ENCODE measurements at regions of chr10 and their contacts with region 1.

Region 1: DNA sequence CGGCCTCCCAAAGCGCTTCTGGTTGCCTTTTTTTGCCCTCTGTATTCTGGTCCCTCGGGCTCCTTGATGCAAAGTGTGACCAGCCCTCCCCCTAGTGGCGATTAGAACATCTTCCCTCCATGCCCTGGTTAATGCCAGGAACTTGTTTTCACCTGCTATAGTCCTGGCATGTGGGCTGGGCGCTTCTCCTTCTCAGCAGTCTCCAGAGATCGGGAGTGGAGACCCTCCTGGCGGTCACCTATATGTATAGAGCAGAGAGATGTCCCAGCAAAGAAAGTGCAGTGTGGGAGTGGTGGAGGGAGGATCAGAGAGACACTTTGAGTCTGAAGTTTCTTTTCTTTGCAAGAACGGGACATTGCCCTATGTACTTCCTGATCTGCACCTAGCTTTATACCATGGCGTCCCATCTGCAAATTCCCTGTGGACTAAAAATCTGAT is 264.1 kb downstream of the OTUD1 start:
- DNase-seq: peak; percentile 72
- H3K4me3 Mint-ChIP-seq: no peak overlapping the region
- H3K27ac Mint-ChIP-seq: no peak overlapping the region
- H3K4me1 Mint-ChIP-seq: peaks cover 13% of the 10 kb centered on the region
- H3K27me3 Mint-ChIP-seq: peaks cover 20% of the 10 kb centered on the region

Region 2: GRCh38 chr10:23293145-23293724 is 409.8 kb before region 1 on chr10:
- CTCF ChIA-PET with region 1: no interaction called
- intact Hi-C with region 1: loop called (anchors 1 kb)
- DNase-seq: peak; percentile 71
- H3K4me3 Mint-ChIP-seq: no peak overlapping the region
- H3K27ac Mint-ChIP-seq: no peak overlapping the region
- H3K4me1 Mint-ChIP-seq: peaks cover 2% of the 10 kb centered on the region
- H3K27me3 Mint-ChIP-seq: peaks cover 14% of the 10 kb centered on the region

Region 3: DNA sequence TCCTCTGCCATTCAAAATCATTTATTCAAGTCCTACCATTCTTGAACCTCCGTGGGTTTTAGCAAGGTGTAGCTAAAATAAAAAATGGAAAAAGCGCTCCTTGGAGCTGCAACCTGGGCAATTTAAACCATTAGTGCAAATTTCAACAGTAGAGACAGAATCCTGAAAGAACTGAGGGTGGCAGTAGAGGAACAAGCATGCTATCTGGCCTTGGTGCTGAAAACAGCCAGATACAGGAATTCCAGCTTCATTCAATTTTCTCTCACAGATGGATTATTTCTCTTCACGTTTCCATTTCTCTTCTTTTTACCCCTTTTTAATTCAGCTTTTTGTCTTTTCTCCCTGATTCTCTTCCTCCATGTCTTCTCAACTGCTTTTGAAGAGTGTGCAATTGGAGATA is 186.5 kb before region 1 on chr10:
- CTCF ChIA-PET with region 1: interaction called, 3 read pairs
- intact Hi-C with region 1: loop called (anchors 1 kb)
- DNase-seq: no peak
- H3K4me3 Mint-ChIP-seq: no peak overlapping the region
- H3K27ac Mint-ChIP-seq: no peak overlapping the region
- H3K4me1 Mint-ChIP-seq: peaks cover 8% of the 10 kb centered on the region
- H3K27me3 Mint-ChIP-seq: no peaks in the 10 kb centered on the region

Region 4: DNA sequence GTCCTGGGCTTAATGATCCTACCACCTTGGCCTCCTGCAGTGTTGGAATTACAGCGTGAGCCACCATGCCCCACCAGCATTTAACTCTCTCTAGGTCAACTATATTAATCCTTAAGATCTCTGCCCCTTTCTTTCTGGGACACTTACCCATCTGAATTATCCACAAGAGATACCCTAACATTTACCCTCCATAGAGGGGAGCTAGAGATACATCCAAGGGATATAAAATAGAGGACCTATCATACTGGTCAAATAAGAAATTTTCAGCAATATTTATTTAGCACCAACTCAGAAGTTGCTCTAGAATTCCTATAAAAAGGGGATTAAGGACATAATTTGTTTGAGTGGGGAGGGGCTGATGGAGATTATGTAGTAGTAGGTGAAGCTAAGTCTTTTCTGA is 167.6 kb before region 1 on chr10:
- CTCF ChIA-PET with region 1: interaction called, 15 read pairs
- intact Hi-C with region 1: loop called (anchors 1 kb)
- DNase-seq: no peak
- H3K4me3 Mint-ChIP-seq: peak overlapping the region; percentile 14
- H3K27ac Mint-ChIP-seq: peak overlapping the region; percentile 72
- H3K4me1 Mint-ChIP-seq: peaks cover 77% of the 10 kb centered on the region
- H3K27me3 Mint-ChIP-seq: no peaks in the 10 kb centered on the region

Region 5: GRCh38 chr10:23656735-23657134 is 46.3 kb before region 1 on chr10:
- CTCF ChIA-PET with region 1: no interaction called
- intact Hi-C with region 1: no loop called
- DNase-seq: peak; percentile 16
- H3K4me3 Mint-ChIP-seq: no peak overlapping the region
- H3K27ac Mint-ChIP-seq: no peak overlapping the region
- H3K4me1 Mint-ChIP-seq: peaks cover 2% of the 10 kb centered on the region
- H3K27me3 Mint-ChIP-seq: peaks cover 4% of the 10 kb centered on the region

Region 6: DNA sequence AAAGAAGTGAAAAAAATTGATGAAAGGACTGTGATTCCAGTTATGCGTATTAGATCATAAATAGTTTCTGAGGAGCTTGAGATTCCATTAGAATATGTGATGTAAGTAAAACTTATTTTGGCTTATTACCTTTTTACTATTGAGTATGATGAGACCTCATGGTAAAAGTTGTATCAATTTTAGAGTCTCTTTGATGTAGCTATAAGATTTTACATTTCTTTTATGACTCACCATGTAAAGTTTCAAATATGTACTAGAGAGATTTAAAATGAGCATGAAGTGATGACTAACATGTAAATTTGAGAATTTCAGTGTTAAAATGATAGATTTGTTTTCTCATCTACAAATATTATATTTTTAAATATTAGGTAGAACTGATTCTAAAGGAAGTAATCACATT is 12.4 kb after region 1 on chr10:
- CTCF ChIA-PET with region 1: interaction called, 4 read pairs
- intact Hi-C with region 1: loop called (anchors 1 kb)
- DNase-seq: no peak
- H3K4me3 Mint-ChIP-seq: no peak overlapping the region
- H3K27ac Mint-ChIP-seq: no peak overlapping the region
- H3K4me1 Mint-ChIP-seq: peaks cover 12% of the 10 kb centered on the region
- H3K27me3 Mint-ChIP-seq: peaks cover 28% of the 10 kb centered on the region

Region 7: DNA sequence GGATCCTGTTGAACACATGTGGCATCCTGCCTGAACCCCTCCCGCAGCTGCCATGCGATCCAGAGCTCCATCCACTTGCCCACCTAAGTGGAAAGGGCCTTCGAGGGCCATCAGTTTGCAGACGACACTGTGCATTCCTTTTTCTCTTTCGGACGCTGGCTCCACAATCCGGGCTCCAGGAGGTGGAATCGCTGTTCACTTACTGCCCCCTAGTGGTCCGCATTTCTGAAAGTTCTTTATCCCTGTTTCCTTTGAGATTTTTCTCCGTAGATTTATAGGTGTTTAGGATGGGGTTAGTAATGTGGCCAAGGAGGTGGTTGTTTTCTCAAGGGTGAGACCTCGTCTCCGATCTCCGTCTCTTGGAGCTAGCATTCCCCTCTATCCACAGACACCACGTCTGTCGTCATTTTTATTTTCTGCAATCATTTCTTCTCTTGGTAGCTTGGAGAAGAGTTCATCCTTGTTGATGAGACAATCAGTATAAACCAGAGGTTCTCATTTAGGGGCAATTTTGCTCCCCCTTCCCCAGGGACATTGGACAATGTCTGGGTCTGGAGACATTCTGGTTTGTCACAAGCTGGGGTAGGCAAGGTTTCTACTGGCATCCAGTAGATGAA is 816.1 kb after region 1 on chr10:
- CTCF ChIA-PET with region 1: interaction called, 3 read pairs
- intact Hi-C with region 1: loop called (anchors 10 kb)
- DNase-seq: peak; percentile 62
- H3K4me3 Mint-ChIP-seq: no peak overlapping the region
- H3K27ac Mint-ChIP-seq: no peak overlapping the region
- H3K4me1 Mint-ChIP-seq: peaks cover 14% of the 10 kb centered on the region
- H3K27me3 Mint-ChIP-seq: peaks cover 7% of the 10 kb centered on the region

Measured in activated naive CD4-positive, alpha-beta T cell treated with anti-CD3 and anti-CD28 coated beads for 36 hours (primary cell).